ENCODE measurements at regions of chr19 and their contacts with region 1.

Region 1: GRCh38 chr19:5803752-5804515 is 933 bp upstream of the NRTN start:
- DNase-seq: peak; percentile 96

Region 2: DNA sequence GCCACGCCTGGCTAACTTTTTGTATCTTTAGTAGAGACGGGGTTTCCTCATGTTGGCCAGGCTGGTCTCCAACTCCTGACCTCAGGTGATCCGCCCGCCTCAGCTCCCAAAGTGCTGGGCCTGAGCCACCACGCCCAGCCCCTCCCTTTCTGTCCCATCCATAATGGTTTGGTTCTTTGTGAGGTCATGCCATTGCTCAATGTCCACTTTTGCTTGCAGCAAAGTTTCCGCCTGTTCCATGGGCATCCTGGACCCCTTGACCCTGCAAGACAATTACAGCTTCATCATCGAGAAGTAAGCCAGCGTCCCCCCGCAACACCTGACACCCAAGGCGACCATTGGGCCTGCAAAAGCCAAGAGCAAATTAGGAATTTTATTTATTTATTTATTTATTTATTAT is 36.0 kb before region 1 on chr19:
- CTCF ChIA-PET with region 1: no interaction called
- POLR2A ChIA-PET with region 1: no interaction called
- DNase-seq: no peak

Region 3: GRCh38 chr19:5790573-5791520 is 13.1 kb before region 1 on chr19 and contains the start of gene DUS3L:
- CTCF ChIA-PET with region 1: interaction called, 17 read pairs
- POLR2A ChIA-PET with region 1: interaction called, 9 read pairs
- DNase-seq: peak; percentile 96

Region 4: GRCh38 chr19:5827891-5828660 is 24.1 kb after region 1 on chr19:
- CTCF ChIA-PET with region 1: interaction called, 23 read pairs
- POLR2A ChIA-PET with region 1: interaction called, 19 read pairs
- DNase-seq: peak; percentile 98

Region 5: DNA sequence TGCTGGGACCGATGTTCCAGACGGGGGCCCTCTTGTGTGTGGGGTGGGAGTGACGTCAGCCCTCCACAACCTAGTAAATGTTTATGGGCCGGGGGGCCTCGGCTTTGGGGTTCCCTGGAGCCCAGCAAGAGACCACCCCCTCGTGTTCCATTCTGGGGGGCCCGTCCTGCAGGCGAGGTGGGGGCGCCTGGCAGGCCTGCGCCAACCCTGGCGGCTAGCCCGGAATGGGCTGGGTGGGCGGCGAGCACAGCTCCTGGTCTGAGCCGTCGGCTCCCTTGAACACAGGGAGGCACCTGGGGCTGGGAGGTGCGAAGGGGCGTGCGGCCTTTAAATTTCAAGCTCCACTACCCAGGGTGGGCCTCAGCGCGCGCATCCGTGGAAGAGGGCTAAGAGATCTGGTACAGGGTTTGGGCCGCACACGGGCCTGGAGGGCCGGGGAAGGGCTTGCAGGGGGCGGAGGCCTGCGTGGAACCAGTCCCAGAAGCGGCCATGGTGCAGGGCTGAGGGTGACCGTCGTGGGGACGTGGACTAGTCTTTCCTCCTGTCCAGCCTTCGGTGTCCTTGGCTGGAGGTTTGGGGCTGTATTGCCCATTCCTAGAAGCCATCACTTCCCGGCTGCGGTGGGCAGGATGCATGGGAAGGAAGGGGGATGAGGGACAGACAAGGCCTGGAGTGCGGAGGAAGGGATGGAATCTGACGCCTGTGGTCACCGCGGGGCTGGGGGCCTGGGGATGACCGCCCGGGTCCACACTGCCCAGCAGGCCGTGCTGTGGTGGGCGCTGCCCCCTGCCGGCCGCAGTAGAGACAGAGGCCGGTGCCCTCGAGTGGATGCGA is 88.2 kb after region 1 on chr19:
- CTCF ChIA-PET with region 1: interaction called, 22 read pairs
- POLR2A ChIA-PET with region 1: interaction called, 8 read pairs
- DNase-seq: peak; percentile 56

Region 6: DNA sequence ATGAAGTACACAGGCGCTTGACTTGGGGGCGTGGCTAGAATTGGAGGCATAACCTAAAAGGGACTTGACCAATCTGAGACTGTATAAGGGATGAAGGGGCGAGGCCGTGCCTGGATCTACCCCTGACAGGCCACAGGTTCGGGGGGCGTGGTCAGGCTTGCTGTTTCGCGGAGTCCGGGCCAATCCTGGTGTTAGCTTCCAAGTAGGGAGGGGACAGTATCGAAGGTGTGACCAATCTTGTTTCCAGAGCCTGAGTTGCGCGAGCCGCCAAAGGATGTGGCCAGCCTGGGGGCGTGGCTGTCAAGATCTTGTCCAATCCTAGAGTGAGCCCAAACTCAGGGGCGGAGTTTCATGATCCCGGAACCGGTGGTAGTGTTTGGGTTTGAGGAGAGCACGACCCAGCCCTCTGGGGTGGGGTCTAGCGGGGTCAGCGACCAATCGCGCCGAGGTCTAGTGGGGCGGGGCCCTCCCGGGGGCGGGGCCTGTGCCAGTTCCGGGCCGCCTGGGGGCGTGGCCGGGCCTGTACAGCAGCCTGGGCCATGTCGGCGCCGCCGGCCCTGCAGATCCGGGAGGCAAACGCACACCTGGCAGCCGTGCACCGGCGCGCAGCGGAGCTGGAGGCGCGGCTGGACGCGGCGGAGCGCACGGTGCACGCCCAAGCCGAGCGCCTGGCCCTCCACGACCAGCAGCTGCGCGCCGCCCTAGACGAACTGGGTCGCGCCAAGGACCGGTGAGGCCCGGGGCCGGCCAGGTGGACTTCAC is 100.6 kb after region 1 on chr19 and contains the start of gene VMAC:
- CTCF ChIA-PET with region 1: interaction called, 9 read pairs
- POLR2A ChIA-PET with region 1: interaction called, 20 read pairs
- DNase-seq: peak; percentile 96

Region 7: GRCh38 chr19:6021878-6022569 is 218.1 kb after region 1 on chr19:
- CTCF ChIA-PET with region 1: interaction called, 13 read pairs
- POLR2A ChIA-PET with region 1: no interaction called
- DNase-seq: peak; percentile 86